CD8-positive, alpha-beta T cell (primary cell): ENCODE measurements at regions of chr16 and their contacts with region 1.

Region 1: GRCh38 chr16:71311553-71312158 is 22.5 kb upstream of the CMTR2 start:
- DNase-seq: peak in 6 of 9 experiments; percentile 4 to 55 (median 35)
- ATAC-seq: no peak
- H3K4me3 ChIP-seq: no peak overlapping the region
- H3K4me3 Mint-ChIP-seq: no peak overlapping the region
- H3K27ac ChIP-seq: no peak overlapping the region
- H3K27ac Mint-ChIP-seq: no peak overlapping the region
- H3K4me1 ChIP-seq: no peaks in the 10 kb centered on the region
- H3K4me1 Mint-ChIP-seq: no peaks in the 10 kb centered on the region
- H3K27me3 ChIP-seq: peaks cover 2 to 4% of the 10 kb centered on the region in 2 experiments
- H3K27me3 Mint-ChIP-seq: peaks cover 40% of the 10 kb centered on the region
- CTCF ChIP-seq: peak; percentile 77

Region 2: DNA sequence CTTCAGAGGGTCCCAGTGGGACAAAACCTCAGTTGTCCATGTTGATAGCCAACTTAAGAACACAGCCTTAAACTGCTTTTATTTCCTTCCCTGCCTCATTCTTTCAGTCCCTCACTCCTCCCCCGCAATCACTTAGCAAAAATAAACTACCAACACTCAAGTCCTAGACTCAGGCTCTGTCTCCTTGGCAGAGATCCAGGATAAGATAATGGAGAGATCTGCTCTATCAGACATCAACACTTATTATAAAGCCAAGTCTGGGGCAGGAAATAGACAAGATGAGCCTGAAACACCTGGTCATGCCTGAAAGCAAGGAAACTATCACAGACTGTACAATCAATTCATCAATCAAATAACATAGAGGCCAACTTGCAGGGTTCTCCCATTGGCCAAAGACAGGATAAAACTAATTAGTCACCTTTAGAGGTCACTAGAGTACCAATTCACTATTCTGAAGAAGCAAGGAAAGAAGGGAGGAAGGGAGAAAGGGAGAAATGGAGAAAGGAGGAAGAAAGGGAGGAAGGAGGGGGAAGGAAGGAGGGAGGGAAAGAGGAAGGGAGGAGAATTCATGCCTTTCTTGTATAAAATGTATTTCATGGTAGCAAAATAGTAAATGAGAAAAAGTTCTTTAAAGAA is 96.8 kb before region 1 on chr16:
- CTCF ChIA-PET with region 1: interaction called, 3 read pairs
- POLR2A ChIA-PET with region 1: no interaction called
- intact Hi-C with region 1: loop called (anchors 2 to 10 kb)
- DNase-seq: peak in 1 of 9 experiments; percentile 4
- ATAC-seq: no peak
- H3K4me3 ChIP-seq: no peak overlapping the region
- H3K4me3 Mint-ChIP-seq: no peak overlapping the region
- H3K27ac ChIP-seq: no peak overlapping the region
- H3K27ac Mint-ChIP-seq: no peak overlapping the region
- H3K4me1 ChIP-seq: no peaks in the 10 kb centered on the region
- H3K4me1 Mint-ChIP-seq: no peaks in the 10 kb centered on the region
- H3K27me3 ChIP-seq: no peaks in the 10 kb centered on the region
- H3K27me3 Mint-ChIP-seq: peaks cover 22% of the 10 kb centered on the region
- CTCF ChIP-seq: no peak